ENCODE measurements at regions of chr17 and their contacts with region 1.

Region 1: DNA sequence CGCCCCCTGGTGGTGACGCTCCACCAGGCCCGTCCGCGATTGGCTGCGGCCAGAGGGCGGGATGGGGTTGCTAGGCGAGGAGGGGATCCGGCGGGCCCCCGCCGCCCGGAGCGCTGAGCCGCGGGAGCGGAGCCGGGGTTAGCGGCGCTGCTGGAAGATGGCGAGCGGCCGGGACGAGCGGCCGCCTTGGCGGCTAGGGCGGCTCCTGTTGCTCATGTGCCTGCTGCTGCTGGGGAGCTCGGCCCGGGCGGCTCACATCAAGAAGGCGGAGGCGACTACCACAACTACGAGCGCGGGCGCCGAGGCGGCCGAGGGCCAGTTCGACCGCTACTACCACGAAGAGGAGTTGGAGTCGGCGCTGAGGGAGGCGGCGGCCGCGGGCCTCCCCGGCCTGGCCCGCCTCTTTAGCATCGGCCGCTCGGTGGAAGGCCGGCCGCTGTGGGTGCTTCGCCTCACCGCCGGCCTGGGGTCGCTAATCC is at the start of gene CPD:
- DNase-seq: peak; percentile 95
- H3K4me3 ChIP-seq: peak within 1 kb of the TSS; percentile 81
- H3K27ac ChIP-seq: no peak within 1 kb of the TSS
- H3K4me1 ChIP-seq: peaks cover 27% of the 10 kb centered on the region
- CTCF ChIP-seq: no peak
- total RNA-seq, gene CPD: 16.4 and 20.7 TPM in 2 replicates

Region 2: DNA sequence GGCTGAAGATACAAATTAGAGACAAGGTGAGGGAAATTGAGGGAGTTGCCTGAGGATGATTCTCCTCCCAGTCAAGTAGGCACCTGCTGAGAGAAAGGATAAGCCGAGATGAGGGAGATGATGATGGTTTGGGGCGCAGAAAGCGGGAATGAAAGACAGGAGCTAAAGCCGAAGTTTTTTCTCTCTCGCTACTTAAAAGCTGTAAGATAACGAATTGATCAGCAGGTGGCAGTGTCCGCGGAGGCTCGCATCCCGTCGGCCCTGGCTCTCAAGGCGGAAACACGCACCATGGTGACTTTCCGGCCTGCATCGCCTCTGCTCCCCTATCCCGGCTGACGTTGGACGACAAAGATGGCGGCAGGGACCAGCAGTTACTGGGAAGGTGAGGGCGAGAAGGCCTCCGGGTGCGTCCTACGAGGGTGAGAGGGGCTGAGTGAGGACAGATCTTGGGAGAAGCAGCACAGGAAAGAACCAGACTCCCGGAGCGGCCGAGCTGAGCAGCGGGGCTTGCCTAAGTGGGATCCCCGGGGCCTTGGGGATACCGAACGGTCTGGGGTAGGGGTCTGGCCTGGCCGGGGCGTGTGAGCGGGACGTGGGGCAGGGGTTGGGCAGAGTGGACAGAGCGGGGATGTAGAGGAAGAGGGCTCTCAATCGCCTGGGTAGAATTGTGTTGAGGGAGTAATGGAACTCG is 98.4 kb after region 1 on chr17 and contains the start of gene GOSR1:
- CTCF ChIA-PET with region 1: no interaction called
- POLR2A ChIA-PET with region 1: interaction called, 4 read pairs
- intact Hi-C with region 1: loop called (anchors 1 kb)
- DNase-seq: peak; percentile 96
- H3K4me3 ChIP-seq: peak within 1 kb of the TSS; percentile 88
- H3K27ac ChIP-seq: peak within 1 kb of the TSS; percentile 42
- H3K4me1 ChIP-seq: peaks cover 17% of the 10 kb centered on the region
- CTCF ChIP-seq: peak; percentile 84
- total RNA-seq, gene GOSR1: 15.9 and 17.0 TPM in 2 replicates

Region 3: GRCh38 chr17:30701498-30701989 is 322.7 kb after region 1 on chr17:
- CTCF ChIA-PET with region 1: no interaction called
- POLR2A ChIA-PET with region 1: no interaction called
- intact Hi-C with region 1: loop called (anchors 5 kb)
- DNase-seq: no peak
- H3K4me3 ChIP-seq: no peak overlapping the region
- H3K27ac ChIP-seq: no peak overlapping the region
- H3K4me1 ChIP-seq: peaks cover 1% of the 10 kb centered on the region
- CTCF ChIP-seq: no peak

Region 4: GRCh38 chr17:30831663-30832437 is 453.0 kb after region 1 on chr17 and contains the start of gene ATAD5:
- CTCF ChIA-PET with region 1: no interaction called
- POLR2A ChIA-PET with region 1: no interaction called
- intact Hi-C with region 1: loop called (anchors 5 kb)
- DNase-seq: peak; percentile 91
- H3K4me3 ChIP-seq: peak within 1 kb of the TSS; percentile 81
- H3K27ac ChIP-seq: peak within 1 kb of the TSS; percentile 60
- H3K4me1 ChIP-seq: peaks cover 21% of the 10 kb centered on the region
- CTCF ChIP-seq: no peak
- total RNA-seq, gene ATAD5: 20.9 and 21.4 TPM in 2 replicates